ENCODE measurements at regions of chr19 and their contacts with region 1.

Region 1: DNA sequence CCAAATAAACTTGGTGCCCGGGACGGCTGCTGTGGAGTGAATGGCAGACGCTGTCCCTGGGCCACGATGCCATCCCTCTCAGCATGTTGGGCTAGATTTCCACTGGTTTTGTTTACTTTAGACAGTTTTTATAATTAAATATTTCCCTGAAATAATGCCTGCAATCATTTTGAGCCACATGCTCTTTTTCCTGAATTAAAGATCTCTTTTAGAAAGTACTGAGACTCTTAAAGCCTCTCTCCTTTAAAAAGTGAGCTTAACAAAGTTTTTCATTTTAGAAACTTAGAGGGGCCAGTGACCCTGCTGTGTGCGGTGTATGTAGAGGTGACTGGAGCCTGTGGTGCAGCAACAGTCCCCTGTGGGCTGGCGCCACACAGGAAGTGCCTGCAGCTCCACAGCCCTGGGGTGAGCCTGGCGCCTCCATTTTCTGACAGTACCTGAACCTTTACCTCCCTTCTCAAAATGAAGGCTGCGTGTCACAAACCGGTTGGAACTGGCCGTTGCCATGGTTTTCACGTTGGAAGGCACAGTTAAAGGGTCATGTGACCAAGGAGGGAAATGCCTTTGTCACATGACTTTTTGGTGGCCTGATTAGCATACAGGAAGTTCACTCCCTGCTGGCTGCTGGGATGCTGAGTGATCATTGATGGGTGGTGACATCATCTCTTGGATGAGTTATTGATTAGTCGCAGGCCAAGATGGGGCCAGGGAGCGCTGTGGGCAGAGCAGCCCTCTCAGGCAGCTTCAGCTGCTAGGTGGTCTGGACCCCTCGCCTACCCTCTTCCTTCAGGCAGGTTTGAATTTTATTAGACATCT is 26.3 kb downstream of the TSSK6 start:
- DNase-seq: peak; percentile 91
- H3K4me3 Mint-ChIP-seq: peak overlapping the region; percentile 72
- H3K27ac Mint-ChIP-seq: peak overlapping the region; percentile 99
- H3K4me1 Mint-ChIP-seq: peaks cover 34% of the 10 kb centered on the region
- H3K27me3 Mint-ChIP-seq: no peaks in the 10 kb centered on the region

Region 2: DNA sequence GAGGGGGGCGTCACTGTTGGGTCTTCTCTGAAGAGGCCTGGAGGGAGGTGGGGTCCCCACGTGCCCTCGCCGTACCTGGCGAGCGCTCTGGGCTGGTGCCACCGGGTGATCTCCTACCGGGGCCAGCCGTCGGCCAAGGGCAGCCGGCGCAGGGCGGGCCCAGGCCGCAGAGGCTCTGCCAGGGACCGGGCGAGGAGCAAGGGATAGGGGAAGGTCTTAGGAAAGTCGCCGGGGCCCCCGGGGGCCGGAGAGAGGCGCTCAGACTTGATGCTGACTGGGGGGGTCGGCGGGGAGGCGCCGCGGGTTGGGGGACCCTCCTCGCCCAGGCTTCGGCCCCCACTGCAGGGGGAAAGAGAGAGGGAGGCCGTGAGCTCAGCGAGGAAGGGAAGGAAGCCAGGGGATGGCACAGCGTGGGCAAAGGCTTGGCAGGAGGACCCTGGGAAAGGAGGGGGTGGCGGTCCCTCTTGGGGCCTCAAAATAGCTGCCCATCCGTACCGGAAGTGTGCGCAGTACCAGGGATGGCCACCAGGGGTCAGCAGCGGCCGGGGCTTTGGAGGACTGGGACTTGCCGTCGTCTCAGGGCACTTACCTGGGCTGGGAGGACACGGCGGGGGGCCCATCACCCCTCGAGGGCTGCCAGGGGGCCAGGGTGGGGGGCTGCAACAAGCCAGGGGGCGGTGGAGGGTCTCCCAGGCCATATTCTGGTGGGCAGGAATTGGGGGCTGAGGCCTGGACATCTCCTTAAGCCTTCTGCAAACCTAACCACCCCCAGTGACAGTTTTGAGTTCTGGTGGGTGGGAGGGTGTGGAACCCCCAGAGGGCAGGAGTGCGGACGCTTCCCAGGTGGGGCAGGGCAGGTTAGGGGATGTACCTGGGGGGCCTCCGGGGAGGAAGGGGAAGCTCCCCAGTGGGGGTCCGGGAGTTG is 343.1 kb before region 1 on chr19:
- intact Hi-C with region 1: loop called (anchors 1 kb)
- DNase-seq: peak; percentile 80
- H3K4me3 Mint-ChIP-seq: no peak overlapping the region
- H3K27ac Mint-ChIP-seq: no peak overlapping the region
- H3K4me1 Mint-ChIP-seq: no peaks in the 10 kb centered on the region
- H3K27me3 Mint-ChIP-seq: no peaks in the 10 kb centered on the region

Region 3: GRCh38 chr19:19250196-19250801 is 238.8 kb before region 1 on chr19:
- intact Hi-C with region 1: no loop called
- DNase-seq: no peak
- H3K4me3 Mint-ChIP-seq: no peak overlapping the region
- H3K27ac Mint-ChIP-seq: no peak overlapping the region
- H3K4me1 Mint-ChIP-seq: no peaks in the 10 kb centered on the region
- H3K27me3 Mint-ChIP-seq: peaks cover 13% of the 10 kb centered on the region

Region 4: DNA sequence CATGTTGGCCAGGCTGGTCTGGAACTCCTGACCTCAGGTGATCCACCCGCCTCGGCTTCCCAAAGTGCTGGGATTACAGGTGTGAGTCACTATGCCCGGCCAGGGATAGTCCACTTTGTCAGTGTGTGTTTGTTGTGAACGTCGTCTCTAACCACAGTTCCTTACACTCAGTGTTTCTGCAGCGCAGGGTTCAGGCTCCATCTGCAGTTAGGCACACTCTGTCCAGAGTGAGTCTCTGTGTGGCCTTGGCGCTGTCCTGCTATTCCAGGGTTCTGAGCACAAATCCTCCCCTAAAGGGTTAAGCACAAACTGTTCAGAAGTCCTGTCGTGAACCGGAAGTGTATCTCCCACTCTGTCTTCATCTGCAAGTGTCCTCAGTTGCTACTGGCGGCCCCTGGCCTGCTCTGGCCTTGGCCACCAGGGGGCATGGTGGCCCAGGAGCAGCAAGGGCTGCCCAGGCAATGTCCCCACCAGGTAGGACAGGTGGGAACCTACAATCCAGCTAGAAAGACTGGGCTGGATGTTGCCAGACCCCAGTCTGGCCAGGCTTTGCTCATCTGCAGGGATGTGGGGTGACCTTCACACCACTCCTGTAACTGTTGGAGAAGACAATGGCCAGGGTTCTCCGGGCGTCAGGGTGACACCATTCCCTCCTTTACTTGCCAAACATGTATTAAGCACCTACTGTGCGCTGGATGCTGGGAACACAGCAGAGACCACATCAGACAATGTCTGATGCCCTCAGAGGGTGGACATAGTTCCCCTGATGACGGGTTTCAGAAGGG is 122.3 kb before region 1 on chr19:
- intact Hi-C with region 1: loop called (anchors 1 kb)
- DNase-seq: peak; percentile 66
- H3K4me3 Mint-ChIP-seq: peak overlapping the region; percentile 55
- H3K27ac Mint-ChIP-seq: no peak overlapping the region
- H3K4me1 Mint-ChIP-seq: peaks cover 14% of the 10 kb centered on the region
- H3K27me3 Mint-ChIP-seq: no peaks in the 10 kb centered on the region

Region 5: GRCh38 chr19:19404879-19405860 is 83.9 kb before region 1 on chr19 and contains the start of gene GATAD2A:
- intact Hi-C with region 1: loop called (anchors 1 kb)
- DNase-seq: peak; percentile 88
- H3K4me3 Mint-ChIP-seq: peak within 1 kb of the TSS; percentile 99
- H3K27ac Mint-ChIP-seq: peak within 1 kb of the TSS; percentile 97
- H3K4me1 Mint-ChIP-seq: peaks cover 60% of the 10 kb centered on the region
- H3K27me3 Mint-ChIP-seq: no peaks in the 10 kb centered on the region
- total RNA-seq, gene GATAD2A: 139 and 142 TPM in 2 replicates

Region 6: DNA sequence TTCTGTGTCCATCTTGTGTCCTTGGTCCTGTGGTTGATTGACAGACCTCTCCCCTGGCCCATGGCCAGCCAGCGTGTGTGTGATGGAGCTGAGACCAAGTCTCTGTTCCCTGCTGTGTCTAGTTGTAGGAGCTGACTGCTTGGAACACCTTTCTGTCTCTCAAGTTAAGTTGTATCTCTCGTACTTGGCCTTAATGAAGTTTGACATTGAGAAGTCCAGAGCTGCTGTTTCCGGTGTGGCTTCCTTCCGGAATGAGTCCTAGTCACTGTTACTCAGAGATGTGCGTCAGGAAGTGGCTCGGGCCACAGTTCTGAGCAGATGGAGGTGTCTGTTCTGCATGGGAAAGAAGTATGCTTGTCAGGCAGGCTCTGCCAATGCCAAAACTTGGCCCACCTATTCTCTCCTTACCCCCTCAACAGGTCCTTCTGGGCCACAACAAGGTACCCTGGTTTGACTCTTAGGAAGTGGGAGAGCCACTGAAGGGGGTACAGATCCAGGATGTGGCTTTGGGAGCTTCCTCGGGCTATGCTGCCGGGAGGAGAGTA is 29.3 kb before region 1 on chr19:
- intact Hi-C with region 1: loop called (anchors 1 kb)
- DNase-seq: peak; percentile 53
- H3K4me3 Mint-ChIP-seq: peak overlapping the region; percentile 82
- H3K27ac Mint-ChIP-seq: peak overlapping the region; percentile 97
- H3K4me1 Mint-ChIP-seq: peaks cover 65% of the 10 kb centered on the region
- H3K27me3 Mint-ChIP-seq: no peaks in the 10 kb centered on the region